ENCODE measurements at regions of chr6 and their contacts with region 1.

Region 1: GRCh38 chr6:50762798-50763197 is 49.5 kb downstream of the TFAP2D start:
- DNase-seq: no peak
- CTCF ChIP-seq: no peak

Region 2: DNA sequence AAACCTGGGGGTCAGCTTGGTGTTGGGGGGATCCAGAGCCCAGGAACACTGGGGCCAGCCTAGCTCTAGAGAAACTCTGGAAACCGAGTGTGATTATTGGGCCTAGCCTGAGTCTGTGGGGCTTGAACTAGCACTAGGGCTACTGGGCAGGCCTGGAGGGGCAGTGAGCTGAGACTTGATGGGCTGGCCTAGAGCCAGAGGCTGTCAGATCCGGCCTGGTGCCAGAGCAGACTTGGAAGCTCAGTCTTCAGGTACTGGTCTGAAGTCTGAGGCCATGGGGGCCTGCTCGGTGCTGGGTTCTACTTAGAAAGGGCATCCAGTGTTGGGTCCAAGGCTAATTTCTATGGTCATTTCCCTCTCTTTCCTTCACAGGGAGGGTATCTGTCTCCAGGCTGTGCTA is 715.8 kb before region 1 on chr6:
- CTCF ChIA-PET with region 1: no interaction called
- POLR2A ChIA-PET with region 1: no interaction called
- DNase-seq: no peak
- CTCF ChIP-seq: no peak

Region 3: DNA sequence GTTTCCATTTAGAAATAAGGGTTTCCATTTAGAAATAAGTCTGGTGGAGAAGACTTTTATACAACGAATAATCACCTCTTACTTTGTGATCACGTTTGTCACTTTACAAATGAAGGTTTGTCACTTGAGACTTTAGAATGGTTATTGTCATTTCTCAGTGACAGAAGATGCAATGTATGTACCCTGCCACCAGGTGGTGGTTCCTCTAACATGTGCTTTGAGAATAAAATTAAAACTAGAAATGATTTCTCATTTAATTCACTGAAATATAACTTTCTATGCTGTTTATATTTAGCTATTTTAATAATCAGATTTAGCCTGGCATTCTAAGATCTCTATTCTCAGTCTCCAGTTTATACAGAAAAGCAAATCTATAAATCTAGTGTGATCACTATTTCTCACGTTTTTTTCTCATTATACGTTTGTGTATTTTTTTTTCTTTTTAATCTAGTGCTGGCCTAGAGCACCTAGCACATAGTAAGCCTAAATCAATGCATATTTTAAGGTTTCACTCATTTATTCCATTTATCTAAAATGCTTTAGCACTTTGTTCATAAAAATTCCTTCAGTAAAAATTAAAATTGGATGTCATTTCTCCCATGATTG is 106.8 kb before region 1 on chr6:
- CTCF ChIA-PET with region 1: no interaction called
- POLR2A ChIA-PET with region 1: no interaction called
- DNase-seq: peak; percentile 5
- CTCF ChIP-seq: peak; percentile 51

Region 4: GRCh38 chr6:50778696-50779095 is 15.9 kb after region 1 on chr6:
- CTCF ChIA-PET with region 1: interaction called, 16 read pairs
- POLR2A ChIA-PET with region 1: no interaction called
- DNase-seq: no peak
- CTCF ChIP-seq: no peak